ENCODE measurements at regions of chr1 and their contacts with region 1.

Region 1: DNA sequence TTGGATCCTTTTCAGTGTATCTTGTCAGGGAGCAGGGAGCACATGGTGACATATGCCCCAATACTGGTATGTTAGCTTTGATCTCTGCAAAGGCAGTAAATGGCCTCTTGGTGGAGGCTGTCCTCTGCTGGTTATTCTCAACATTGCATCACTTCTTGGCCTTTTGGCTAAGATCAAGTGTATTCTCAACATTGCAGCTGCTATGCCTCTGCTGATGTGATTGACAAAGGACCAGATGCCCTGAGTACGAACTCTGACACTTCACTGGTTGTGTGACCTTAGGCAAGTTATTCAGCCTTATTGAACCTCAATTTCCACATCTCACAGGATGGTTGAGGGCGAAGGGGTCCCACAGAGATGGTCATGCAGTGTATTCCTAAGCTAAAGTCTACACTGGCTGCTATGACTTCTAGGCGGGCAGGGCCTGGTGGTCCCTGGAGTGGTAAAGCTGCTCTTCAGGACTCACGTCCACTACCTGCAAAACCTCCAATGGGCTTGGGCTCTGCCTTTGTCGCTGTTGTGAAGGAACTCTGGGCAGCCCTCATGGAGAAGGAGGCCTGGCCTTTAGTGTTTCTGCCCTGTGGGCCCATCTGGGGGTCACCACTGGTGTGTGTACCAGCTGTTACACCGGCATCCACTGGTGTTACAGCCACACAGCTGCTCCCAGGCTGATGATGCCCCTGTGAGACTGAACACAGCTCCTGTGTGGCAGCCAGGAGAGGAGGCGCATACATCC is 64.8 kb downstream of the DNTTIP2 start:
- DNase-seq: peak; percentile 67
- H3K27ac ChIP-seq: peak overlapping the region; percentile 24; the same call in 1 of the 2 replicates
- CTCF ChIP-seq: peak; percentile 99

Region 2: GRCh38 chr1:93629099-93630059 is 184.8 kb before region 1 on chr1:
- CTCF ChIA-PET with region 1: interaction called, 81 read pairs
- POLR2A ChIA-PET with region 1: no interaction called
- DNase-seq: no peak
- H3K27ac ChIP-seq: peak overlapping the region; percentile 63
- CTCF ChIP-seq: peak; percentile 84

Region 3: GRCh38 chr1:93672069-93672468 is 142.2 kb before region 1 on chr1:
- CTCF ChIA-PET with region 1: interaction called, 16 read pairs
- POLR2A ChIA-PET with region 1: no interaction called
- DNase-seq: no peak
- H3K27ac ChIP-seq: peak overlapping the region; percentile 76
- CTCF ChIP-seq: no peak

Region 4: DNA sequence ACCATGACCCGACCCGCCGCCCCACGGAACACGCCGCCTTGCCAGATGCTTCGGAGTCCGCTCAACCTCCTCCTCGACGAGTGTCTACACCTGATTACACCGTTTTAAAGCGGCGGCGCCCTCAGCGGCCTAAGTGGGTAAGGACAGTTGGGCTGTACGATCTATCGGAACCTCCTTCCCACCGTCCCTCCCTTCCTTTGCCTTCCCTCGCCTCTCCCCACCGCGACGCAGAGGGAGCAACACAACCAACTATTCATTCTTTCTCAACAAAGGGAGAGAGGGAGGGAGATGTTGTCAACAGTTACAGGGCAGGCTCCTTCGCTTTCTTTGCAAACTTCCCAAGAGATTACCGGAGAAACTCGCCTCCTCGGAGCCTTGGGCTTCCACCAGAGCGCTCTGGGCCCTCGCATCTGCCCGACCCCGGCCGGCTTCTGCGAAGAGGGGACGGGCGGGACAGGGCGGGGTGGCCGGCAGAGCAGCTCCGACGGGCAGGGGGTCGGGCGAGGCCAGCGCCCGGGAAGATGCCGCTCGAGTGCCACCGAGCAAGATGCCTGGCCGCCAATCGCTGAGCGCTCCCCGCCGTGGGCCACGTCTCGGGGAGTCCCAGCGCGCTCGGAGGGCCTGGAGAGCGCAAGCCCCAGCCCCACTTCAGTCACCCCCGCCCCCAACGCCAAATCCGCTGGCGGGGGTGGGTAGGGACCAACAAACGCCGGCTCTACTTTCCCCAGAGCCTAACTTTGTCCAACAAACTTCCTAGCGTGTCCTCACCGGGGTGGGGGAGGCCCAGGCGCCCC is 133.3 kb before region 1 on chr1:
- CTCF ChIA-PET with region 1: interaction called, 34 read pairs
- POLR2A ChIA-PET with region 1: interaction called, 5 read pairs
- DNase-seq: peak; percentile 83
- H3K27ac ChIP-seq: peak overlapping the region; percentile 97
- CTCF ChIP-seq: peak; percentile 78

Region 5: GRCh38 chr1:93692451-93692861 is 121.8 kb before region 1 on chr1:
- CTCF ChIA-PET with region 1: interaction called, 12 read pairs
- POLR2A ChIA-PET with region 1: no interaction called
- DNase-seq: peak; percentile 59
- H3K27ac ChIP-seq: peak overlapping the region; percentile 97
- CTCF ChIP-seq: no peak

Region 6: DNA sequence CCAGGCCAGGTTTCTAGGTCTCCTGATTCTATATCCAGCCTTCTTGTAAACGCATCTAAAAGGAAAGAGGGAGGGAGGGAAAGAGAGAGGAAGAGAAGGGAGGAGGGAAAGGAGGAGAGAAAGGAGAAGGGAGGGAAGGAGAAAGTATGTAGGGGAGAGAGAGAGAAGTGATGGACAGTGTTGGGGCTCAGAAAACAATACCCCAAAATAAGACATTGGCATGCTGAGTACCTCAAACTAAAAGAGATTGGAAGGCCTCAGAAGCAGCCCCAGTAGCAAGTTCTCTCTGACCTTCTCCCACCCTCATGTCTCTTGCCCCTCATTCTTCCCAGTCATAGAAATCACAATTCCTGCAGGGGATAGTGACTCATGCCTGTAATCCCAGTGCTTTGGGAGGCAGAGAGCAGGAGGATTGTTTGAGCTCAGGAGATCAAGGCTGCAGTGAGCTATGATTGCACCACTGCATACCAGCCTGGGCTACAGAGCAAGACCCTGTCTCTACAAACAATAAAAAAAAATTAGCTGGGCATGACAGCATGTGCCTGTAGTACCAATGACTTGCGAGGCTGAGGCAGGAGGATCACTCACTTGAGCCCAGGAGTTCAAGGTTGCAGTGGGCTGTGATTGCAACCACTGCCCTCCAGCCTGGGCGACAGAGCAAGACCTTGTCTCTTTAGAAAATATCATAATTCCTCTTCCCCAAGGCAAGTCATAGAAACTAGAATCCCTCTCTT is 13.6 kb after region 1 on chr1:
- CTCF ChIA-PET with region 1: interaction called, 17 read pairs
- POLR2A ChIA-PET with region 1: no interaction called
- DNase-seq: no peak
- H3K27ac ChIP-seq: no peak overlapping the region
- CTCF ChIP-seq: no peak

Measured in RWPE1 (cell line).